ENCODE measurements at regions of chr21 and their contacts with region 1.

Region 1: GRCh38 chr21:42524349-42525151 is 10.9 kb downstream of the SLC37A1 start:
- DNase-seq: peak in 1 of 2 experiments; percentile 77
- H3K4me3 ChIP-seq: peak overlapping the region; percentile 24 to 51 (median 31); a peak in 6 of 8 replicates
- H3K27ac ChIP-seq: 0 out of 2 replicates have a peak overlapping the region, but pooled peaks have one; percentile 3
- H3K4me1 ChIP-seq: peaks cover 8 to 18% (median 14%) of the 10 kb centered on the region in 4 experiments
- H3K27me3 ChIP-seq: no peaks in the 10 kb centered on the region
- CTCF ChIP-seq: no peak
- EP300 ChIP-seq: no peak
- POLR2A ChIP-seq: no peak
- RAD21 ChIP-seq: no peak

Region 2: GRCh38 chr21:42513985-42514882 is 10.3 kb before region 1 on chr21:
- CTCF ChIA-PET with region 1: interaction called, 5 read pairs
- POLR2A ChIA-PET with region 1: interaction called, 19 read pairs
- DNase-seq: peak in 1 of 2 experiments; percentile 80
- H3K4me3 ChIP-seq: peak overlapping the region; percentile 45 to 81 (median 59)
- H3K27ac ChIP-seq: no peak overlapping the region
- H3K4me1 ChIP-seq: peaks cover 13 to 20% (median 15%) of the 10 kb centered on the region in 4 experiments
- H3K27me3 ChIP-seq: peaks cover 0 to 10% (median 6%) of the 10 kb centered on the region in 4 experiments; a peak in 3 of 7 replicates
- CTCF ChIP-seq: no peak
- EP300 ChIP-seq: no peak
- POLR2A ChIP-seq: peak in 1 of 2 experiments; percentile 73; a peak in 2 of 3 replicates
- RAD21 ChIP-seq: no peak

Region 3: DNA sequence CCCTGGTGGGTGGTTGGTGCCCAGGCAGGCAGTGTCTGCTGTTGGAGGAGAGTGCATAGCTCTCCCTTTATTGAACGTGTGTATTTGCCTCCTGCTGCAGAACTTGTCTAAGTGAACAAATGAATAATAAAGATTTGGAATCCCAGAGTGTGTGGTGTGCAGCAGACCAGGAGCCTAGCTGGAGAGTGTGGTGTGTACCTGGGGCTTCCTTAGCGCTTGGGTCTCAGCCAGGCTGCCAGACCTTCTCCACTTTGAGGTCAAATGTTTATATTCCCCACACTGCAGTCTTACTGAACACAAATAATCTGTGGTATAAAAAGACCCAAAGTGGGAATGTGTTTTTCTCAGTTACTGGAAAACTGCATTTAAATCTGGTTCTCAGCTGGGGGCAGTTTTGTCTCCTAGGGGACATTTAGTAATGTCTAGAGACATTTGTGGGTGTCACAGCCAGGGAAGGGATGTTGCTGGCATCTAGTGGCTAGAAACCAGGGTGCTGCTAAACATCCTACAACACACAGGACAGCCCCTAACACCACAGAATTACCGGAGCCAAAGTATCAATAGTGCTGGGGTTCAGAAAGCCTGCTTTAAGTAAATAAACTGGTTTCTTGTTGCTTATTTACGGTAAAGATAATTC is 12.7 kb after region 1 on chr21:
- CTCF ChIA-PET with region 1: interaction called, 13 read pairs
- POLR2A ChIA-PET with region 1: interaction called, 5 read pairs
- DNase-seq: no peak
- H3K4me3 ChIP-seq: no peak overlapping the region
- H3K27ac ChIP-seq: no peak overlapping the region
- H3K4me1 ChIP-seq: peaks cover 0 to 3% (median 0%) of the 10 kb centered on the region in 4 experiments; a peak in 1 of 7 replicates
- H3K27me3 ChIP-seq: no peaks in the 10 kb centered on the region
- CTCF ChIP-seq: peak; percentile 4 to 54 (median 36)
- EP300 ChIP-seq: no peak
- POLR2A ChIP-seq: no peak
- RAD21 ChIP-seq: peak; percentile 58 to 71

Region 4: GRCh38 chr21:42550817-42551216 is 26.3 kb after region 1 on chr21:
- CTCF ChIA-PET with region 1: no interaction called
- POLR2A ChIA-PET with region 1: no interaction called
- DNase-seq: no peak
- H3K4me3 ChIP-seq: no peak overlapping the region
- H3K27ac ChIP-seq: no peak overlapping the region
- H3K4me1 ChIP-seq: peaks cover 0 to 5% (median 0%) of the 10 kb centered on the region in 4 experiments; a peak in 3 of 7 replicates
- H3K27me3 ChIP-seq: no peaks in the 10 kb centered on the region
- CTCF ChIP-seq: no peak
- EP300 ChIP-seq: no peak
- POLR2A ChIP-seq: no peak
- RAD21 ChIP-seq: no peak

Region 5: DNA sequence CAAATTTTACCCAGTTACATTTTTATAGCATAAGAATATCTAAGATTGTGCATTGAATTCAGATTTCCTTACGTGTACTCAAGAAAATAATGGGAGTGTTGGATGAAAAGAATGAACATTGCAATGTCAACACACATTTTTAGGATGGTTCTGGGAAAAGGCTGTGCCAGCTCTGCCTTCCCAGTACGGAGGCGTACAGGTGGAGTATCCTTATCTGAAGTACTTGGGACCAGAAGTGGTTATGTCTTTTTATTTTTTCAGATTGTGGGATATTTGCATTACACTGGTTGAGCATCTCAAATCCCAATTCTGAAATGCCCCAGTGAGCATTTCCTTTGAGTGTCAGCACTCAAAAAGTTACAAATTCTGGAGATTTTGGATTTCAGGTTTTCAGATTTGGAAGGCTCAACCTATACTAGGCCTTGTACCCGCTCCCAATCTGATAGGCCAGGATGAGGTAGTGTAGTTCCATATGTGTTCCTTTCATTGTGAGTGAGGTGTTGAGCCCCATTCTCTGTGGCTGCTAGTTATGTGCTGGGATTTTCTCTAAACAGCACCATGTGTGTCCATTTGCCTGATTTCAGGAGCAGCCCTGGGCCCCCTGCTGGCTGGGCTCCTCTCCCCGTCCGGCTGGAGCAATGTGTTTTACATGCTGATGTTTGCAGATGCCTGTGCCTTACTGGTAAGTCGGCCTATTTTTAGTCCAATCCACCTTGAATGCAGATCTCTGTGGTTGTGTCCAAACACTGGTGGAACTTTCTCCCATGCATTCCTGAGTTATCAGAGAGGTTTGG is 49.9 kb after region 1 on chr21:
- CTCF ChIA-PET with region 1: no interaction called
- POLR2A ChIA-PET with region 1: no interaction called
- DNase-seq: no peak
- H3K4me3 ChIP-seq: no peak overlapping the region
- H3K27ac ChIP-seq: no peak overlapping the region
- H3K4me1 ChIP-seq: no peaks in the 10 kb centered on the region
- H3K27me3 ChIP-seq: no peaks in the 10 kb centered on the region
- CTCF ChIP-seq: no peak
- EP300 ChIP-seq: no peak
- POLR2A ChIP-seq: no peak
- RAD21 ChIP-seq: no peak

Measured in H1 (cell line).